ENCODE measurements at regions of chr16 and their contacts with region 1.

Region 1: DNA sequence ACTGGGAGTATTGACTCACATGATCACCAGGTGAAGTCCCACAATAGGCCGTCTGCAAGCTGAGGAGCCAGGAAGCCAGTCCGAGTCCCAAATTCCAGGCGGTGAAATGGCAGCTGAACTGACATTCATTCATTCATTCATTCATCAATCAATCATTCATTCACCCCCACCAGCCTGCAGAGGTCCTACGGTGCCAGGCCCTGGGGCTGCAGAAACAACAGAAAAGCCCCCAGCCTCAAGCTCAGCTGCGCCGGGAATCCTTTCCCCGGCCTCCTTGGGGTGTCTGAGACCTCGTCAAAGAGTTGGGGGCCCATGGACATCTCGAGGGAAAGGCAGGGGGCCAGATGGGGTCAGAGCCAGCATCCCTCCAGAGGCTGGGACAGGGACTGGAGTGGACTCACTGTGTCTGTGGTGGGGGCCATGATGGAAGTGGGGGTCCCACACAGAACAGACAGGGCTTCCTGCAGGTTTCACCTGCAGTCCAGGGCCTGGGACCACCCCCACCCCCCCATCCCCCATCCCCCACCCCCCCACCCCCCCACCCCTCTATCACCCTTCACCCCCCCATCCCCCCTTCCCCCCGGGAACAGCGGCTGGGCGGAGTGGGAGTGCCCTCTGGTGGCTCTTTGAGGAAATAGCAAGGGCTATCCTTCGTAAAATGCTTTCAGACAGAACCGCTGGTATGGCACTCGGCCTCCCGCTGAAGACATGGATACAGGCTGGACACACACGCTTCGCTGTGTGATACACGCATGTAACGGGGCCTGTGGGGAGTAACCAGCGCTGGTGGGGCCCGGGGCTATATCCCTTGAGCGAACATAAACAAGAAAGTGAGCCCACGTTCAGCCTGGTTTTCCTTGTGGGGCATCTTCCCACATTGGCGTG is 8.5 kb upstream of the ZC3H18 start:
- DNase-seq: peak; percentile 91
- H3K4me3 ChIP-seq: no peak overlapping the region; a peak in 1 of 4 replicates
- H3K27ac ChIP-seq: no peak overlapping the region
- H3K4me1 ChIP-seq: peaks cover 0 to 8% of the 10 kb centered on the region in 2 experiments; a peak in 1 of 4 replicates
- H3K27me3 ChIP-seq: peaks cover 16% of the 10 kb centered on the region; the same call in 1 of the 2 replicates
- CTCF ChIP-seq: peak; percentile 61
- EP300 ChIP-seq: no peak
- RAD21 ChIP-seq: peak; percentile 80

Region 2: DNA sequence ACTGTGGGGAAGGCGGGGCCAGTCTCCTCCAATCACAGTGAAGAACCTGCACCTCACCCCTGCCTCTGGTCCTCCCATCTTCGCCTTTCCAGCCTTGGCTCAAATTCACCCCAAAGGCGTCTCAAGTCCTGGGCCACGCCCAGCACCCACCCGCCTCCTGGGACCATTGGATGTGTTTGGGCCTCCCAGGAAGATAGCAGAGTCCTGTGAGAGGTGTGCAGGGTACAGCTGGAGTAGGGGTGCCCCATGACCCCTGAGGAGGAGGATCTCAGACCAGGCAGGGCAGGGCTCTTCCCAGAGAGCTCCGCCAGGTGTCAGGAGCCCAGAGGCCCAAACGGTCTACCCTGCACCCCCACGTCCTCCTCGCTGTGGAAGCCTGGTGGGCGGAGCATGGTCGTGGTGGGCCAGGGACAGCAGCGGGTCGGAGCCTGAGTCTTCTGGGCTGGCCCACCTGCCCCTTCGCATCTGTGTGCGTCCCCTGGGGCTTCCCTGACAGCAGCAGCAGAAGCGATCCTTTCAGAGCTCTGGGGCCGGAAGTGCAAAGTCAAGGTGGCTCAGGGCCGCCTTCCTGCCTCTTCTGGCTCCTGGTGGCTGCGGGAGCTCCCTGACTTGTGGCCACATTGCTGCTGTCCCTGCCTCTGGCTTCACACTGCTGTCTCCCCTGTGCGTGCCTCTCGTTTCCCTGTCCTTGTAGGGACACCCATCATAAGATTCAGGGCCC is 213.9 kb before region 1 on chr16:
- CTCF ChIA-PET with region 1: no interaction called
- POLR2A ChIA-PET with region 1: no interaction called
- DNase-seq: peak; percentile 20
- H3K4me3 ChIP-seq: no peak overlapping the region
- H3K27ac ChIP-seq: no peak overlapping the region
- H3K4me1 ChIP-seq: no peaks in the 10 kb centered on the region; a peak in 1 of 4 replicates
- H3K27me3 ChIP-seq: no peaks in the 10 kb centered on the region
- CTCF ChIP-seq: no peak
- EP300 ChIP-seq: no peak
- RAD21 ChIP-seq: no peak

Region 3: GRCh38 chr16:88442727-88443576 is 118.8 kb before region 1 on chr16:
- CTCF ChIA-PET with region 1: interaction called, 52 read pairs
- POLR2A ChIA-PET with region 1: no interaction called
- DNase-seq: peak; percentile 98
- H3K4me3 ChIP-seq: peak overlapping the region in 1 of 2 experiments; percentile 35; a peak in 1 of 4 replicates
- H3K27ac ChIP-seq: no peak overlapping the region; a peak in 1 of 4 replicates
- H3K4me1 ChIP-seq: peaks cover 0 to 15% of the 10 kb centered on the region in 2 experiments; a peak in 1 of 4 replicates
- H3K27me3 ChIP-seq: no peaks in the 10 kb centered on the region
- CTCF ChIP-seq: peak; percentile 89
- EP300 ChIP-seq: no peak
- RAD21 ChIP-seq: peak; percentile 98

Region 4: GRCh38 chr16:88452482-88453216 is 109.1 kb before region 1 on chr16:
- CTCF ChIA-PET with region 1: interaction called, 52 read pairs
- POLR2A ChIA-PET with region 1: interaction called, 3 read pairs
- DNase-seq: peak; percentile 98
- H3K4me3 ChIP-seq: peak overlapping the region; percentile 57 to 75
- H3K27ac ChIP-seq: peak overlapping the region; percentile 56 to 86; a peak in 3 of 4 replicates
- H3K4me1 ChIP-seq: peaks cover 13 to 61% of the 10 kb centered on the region in 2 experiments; a peak in 3 of 4 replicates
- H3K27me3 ChIP-seq: no peaks in the 10 kb centered on the region
- CTCF ChIP-seq: no peak
- EP300 ChIP-seq: no peak
- RAD21 ChIP-seq: no peak

Region 5: GRCh38 chr16:88550246-88550661 is 11.5 kb before region 1 on chr16:
- CTCF ChIA-PET with region 1: interaction called, 10 read pairs
- POLR2A ChIA-PET with region 1: no interaction called
- DNase-seq: peak; percentile 33
- H3K4me3 ChIP-seq: no peak overlapping the region
- H3K27ac ChIP-seq: no peak overlapping the region
- H3K4me1 ChIP-seq: peaks cover 0 to 3% of the 10 kb centered on the region in 2 experiments; a peak in 1 of 4 replicates
- H3K27me3 ChIP-seq: peaks cover 28% of the 10 kb centered on the region
- CTCF ChIP-seq: no peak
- EP300 ChIP-seq: no peak
- RAD21 ChIP-seq: no peak

Region 6: GRCh38 chr16:88585269-88585668 is 23.5 kb after region 1 on chr16:
- CTCF ChIA-PET with region 1: no interaction called
- POLR2A ChIA-PET with region 1: no interaction called
- DNase-seq: no peak
- H3K4me3 ChIP-seq: no peak overlapping the region
- H3K27ac ChIP-seq: no peak overlapping the region
- H3K4me1 ChIP-seq: no peaks in the 10 kb centered on the region
- H3K27me3 ChIP-seq: no peaks in the 10 kb centered on the region
- CTCF ChIP-seq: no peak
- EP300 ChIP-seq: no peak
- RAD21 ChIP-seq: no peak

Region 7: GRCh38 chr16:88599092-88599733 is 37.5 kb after region 1 on chr16:
- CTCF ChIA-PET with region 1: no interaction called
- POLR2A ChIA-PET with region 1: no interaction called
- DNase-seq: no peak
- H3K4me3 ChIP-seq: no peak overlapping the region
- H3K27ac ChIP-seq: no peak overlapping the region
- H3K4me1 ChIP-seq: no peaks in the 10 kb centered on the region
- H3K27me3 ChIP-seq: no peaks in the 10 kb centered on the region
- CTCF ChIP-seq: no peak
- EP300 ChIP-seq: no peak
- RAD21 ChIP-seq: no peak

Region 8: GRCh38 chr16:88619859-88620815 is 58.4 kb after region 1 on chr16:
- CTCF ChIA-PET with region 1: no interaction called
- POLR2A ChIA-PET with region 1: no interaction called
- DNase-seq: no peak
- H3K4me3 ChIP-seq: no peak overlapping the region
- H3K27ac ChIP-seq: no peak overlapping the region
- H3K4me1 ChIP-seq: no peaks in the 10 kb centered on the region
- H3K27me3 ChIP-seq: no peaks in the 10 kb centered on the region
- CTCF ChIP-seq: no peak
- EP300 ChIP-seq: no peak
- RAD21 ChIP-seq: no peak